GM10248 (cell line): ENCODE measurements at regions of chr15 and their contacts with region 1.

Region 1: GRCh38 chr15:81106560-81106959 is 27.5 kb upstream of the CFAP161 start:
- DNase-seq: peak; percentile 72
- CTCF ChIP-seq: peak; percentile 80

Region 2: DNA sequence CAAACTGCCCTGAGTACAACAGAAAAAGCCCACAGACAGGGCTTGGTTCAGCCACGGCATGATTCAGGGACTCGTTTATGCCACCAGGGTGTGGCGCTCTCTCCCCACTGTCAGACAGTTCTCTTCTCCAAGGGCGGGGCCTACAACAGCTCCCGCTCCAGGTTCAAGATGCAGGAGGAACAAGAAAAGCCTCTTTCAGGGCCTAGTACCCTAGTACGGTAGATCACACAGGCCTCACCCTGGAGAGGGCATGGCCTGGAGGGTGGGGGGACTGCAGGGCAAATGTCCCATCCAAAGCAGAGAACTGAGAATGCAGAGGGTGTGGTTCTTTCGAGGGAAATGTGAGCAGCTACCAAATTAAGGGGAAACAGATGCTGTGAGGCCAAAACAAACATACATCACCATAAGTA is 128.9 kb before region 1 on chr15:
- CTCF ChIA-PET with region 1: interaction called, 10 read pairs
- POLR2A ChIA-PET with region 1: no interaction called
- DNase-seq: peak; percentile 32
- CTCF ChIP-seq: peak; percentile 25

Region 3: DNA sequence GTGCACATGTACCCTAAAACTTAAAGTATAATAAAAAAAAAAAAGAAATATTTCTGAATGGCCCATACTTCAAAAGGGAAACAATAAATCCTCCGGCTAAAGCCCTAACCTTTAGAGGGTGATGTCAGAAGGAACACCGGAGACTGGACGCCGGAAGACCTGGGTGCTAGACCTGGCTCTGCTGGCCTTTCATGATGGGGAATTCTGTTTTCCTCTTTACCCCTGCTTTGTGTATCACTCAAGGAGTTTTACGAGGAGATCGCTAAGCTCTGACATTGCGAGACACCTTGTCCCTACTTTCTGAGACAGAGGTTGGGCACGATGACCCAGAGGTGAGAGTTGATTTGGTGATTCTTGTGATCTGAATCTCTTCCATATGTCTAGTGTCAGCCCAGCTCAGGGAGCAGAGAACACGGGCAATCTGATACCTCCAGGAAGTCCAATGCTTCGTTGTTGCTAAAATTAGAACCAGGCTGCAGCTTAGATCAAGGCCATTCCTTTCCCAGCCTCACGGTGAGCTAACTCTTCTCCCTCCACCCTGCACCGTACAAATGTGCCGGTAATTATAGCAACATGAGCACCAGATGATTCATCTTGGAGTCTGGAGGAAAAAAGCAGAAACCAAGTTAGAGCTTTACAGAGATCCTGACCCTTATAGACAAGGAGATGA is 14.5 kb before region 1 on chr15:
- CTCF ChIA-PET with region 1: interaction called, 12 read pairs
- POLR2A ChIA-PET with region 1: no interaction called
- DNase-seq: no peak
- CTCF ChIP-seq: no peak

Region 4: GRCh38 chr15:81155375-81156218 is 49.0 kb after region 1 on chr15:
- CTCF ChIA-PET with region 1: interaction called, 11 read pairs
- POLR2A ChIA-PET with region 1: no interaction called
- DNase-seq: peak; percentile 41
- CTCF ChIP-seq: peak; percentile 60